Breast epithelium (tissue), 4 donors: ENCODE measurements at regions of chr2 and their contacts with region 1.

Region 1: DNA sequence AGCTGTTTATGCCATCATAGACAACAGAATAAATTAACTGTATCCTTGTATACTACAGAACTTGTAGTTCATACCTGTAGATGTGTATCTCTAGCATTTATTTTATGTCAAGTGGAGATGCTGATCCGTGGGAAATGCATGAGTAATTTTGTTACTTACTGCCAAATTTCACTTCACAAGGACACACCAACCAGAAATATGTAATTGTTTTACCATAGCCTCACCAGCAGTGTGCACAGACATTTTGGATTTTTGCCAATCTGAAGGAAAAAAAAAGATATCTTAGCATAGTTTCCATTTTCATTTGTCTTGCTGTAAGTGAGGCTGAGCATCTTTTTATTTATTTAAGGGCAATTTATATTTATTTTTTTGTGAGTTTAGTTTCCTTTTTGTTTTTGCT is 265.1 kb upstream of the OSR1 start:
- DNase-seq: no peak
- H3K4me3 ChIP-seq: no peak overlapping the region
- H3K27ac ChIP-seq: no peak overlapping the region
- H3K4me1 ChIP-seq: no peaks in the 10 kb centered on the region
- H3K27me3 ChIP-seq: no peaks in the 10 kb centered on the region
- CTCF ChIP-seq: no peak
- POLR2A ChIP-seq: no peak

Region 2: DNA sequence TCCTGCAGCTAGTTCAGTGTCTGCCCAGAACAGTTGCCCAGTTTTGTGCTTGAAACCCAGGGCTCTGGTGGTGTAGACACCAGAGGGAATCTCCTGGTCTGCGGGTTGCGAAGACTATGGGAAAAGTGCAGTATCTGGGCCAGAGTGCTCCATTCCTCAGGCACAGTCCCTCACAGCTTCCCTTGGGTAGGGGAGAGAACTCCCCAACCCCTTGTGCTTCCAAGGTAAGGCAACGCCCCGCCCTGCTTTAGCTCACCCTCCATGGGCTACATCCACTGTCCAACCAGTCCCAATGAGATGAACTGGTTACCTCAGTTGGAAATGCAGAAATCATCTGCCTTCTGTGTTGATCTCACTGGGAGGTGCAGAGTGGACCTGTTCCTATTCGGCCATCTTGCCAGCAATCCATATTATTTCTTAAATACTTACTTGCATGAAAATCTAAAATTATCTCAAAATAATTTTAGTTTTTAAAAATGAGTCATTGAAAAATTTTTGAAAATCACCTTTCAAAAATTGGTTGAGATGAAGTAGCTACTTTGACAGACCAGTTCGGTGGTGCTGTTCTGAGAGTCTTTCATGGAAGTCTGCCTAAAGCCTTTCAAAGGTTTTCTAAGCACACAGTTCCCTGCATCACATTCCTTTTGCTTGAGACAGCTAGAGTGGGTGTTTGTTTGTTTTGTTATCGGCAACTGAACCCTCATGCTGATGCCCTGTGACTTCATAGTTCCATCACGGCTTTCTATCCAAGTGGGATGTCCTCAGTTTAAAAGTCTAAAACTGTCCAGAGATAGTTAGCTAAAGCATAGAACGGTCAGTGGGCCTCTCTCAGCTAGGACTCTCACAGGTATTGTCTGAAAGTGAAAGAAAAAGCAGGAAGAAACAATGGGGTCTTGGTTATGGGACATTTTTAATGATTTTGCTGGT is 602.7 kb before region 1 on chr2:
- intact Hi-C with region 1: loop called (anchors 5 kb)
- DNase-seq: no peak
- H3K4me3 ChIP-seq: no peak overlapping the region
- H3K27ac ChIP-seq: peak overlapping the region; percentile 56 to 60
- H3K4me1 ChIP-seq: no peaks in the 10 kb centered on the region
- H3K27me3 ChIP-seq: no peaks in the 10 kb centered on the region
- CTCF ChIP-seq: no peak
- POLR2A ChIP-seq: no peak

Region 3: DNA sequence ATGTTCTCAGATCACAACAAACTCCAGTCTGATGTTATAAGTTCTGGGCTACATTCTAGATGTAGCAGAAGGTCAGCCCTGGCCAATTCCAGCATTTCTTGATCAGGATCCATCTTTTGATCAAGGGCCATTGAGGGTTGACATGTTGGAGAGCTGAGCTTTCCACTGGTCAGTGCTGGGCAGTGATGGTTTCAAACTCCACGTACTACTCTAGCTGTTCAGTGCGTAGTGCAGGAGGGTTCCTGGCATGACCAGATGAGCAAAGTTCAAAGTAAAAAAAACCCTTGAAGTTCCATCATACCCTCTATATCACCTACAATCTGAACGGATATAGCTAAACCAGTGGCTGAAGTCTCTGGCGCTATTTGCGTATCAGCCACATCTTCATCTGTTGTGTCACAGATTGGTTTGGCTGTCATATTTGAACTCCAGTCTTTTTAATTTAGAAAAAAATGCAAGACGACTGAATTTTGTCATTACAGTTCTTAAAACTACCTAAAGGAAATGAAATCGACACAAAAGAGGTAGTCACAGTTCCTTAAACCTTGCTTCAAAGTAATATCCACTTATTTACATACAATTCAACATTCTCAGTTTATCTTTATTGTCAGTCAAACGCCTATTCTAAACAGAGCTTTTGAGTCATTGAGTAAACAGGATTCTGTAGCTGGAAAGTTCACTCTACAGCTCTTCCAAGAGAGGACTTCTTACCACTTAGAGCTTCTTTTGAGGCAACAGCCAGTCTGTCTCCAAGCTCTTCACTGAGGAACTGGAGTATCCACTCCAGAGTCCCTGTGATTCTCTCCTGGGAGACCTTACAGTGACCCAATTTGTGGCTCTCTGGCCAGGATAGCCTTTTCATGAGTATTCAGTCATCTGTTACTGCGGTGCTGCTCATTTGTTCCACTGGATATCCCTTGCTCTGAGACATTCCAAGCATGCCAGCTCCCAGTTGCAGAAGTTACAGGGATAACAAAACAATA is 54.4 kb before region 1 on chr2:
- intact Hi-C with region 1: loop called (anchors 2 kb)
- DNase-seq: no peak
- H3K4me3 ChIP-seq: no peak overlapping the region
- H3K27ac ChIP-seq: no peak overlapping the region
- H3K4me1 ChIP-seq: no peaks in the 10 kb centered on the region
- H3K27me3 ChIP-seq: no peaks in the 10 kb centered on the region
- CTCF ChIP-seq: no peak
- POLR2A ChIP-seq: no peak

Region 4: GRCh38 chr2:19607931-19608771 is 15.3 kb before region 1 on chr2:
- intact Hi-C with region 1: no loop called
- DNase-seq: no peak
- H3K4me3 ChIP-seq: no peak overlapping the region
- H3K27ac ChIP-seq: peak overlapping the region in 1 of 2 donors; percentile 6
- H3K4me1 ChIP-seq: no peaks in the 10 kb centered on the region
- H3K27me3 ChIP-seq: no peaks in the 10 kb centered on the region
- CTCF ChIP-seq: no peak
- POLR2A ChIP-seq: no peak

Region 5: GRCh38 chr2:21052044-21052443 is 1428.6 kb after region 1 on chr2:
- intact Hi-C with region 1: no loop called
- DNase-seq: no peak
- H3K4me3 ChIP-seq: no peak overlapping the region
- H3K27ac ChIP-seq: no peak overlapping the region
- H3K4me1 ChIP-seq: no peaks in the 10 kb centered on the region
- H3K27me3 ChIP-seq: no peaks in the 10 kb centered on the region
- CTCF ChIP-seq: no peak
- POLR2A ChIP-seq: no peak